Mammary epithelial cell (primary cell): ENCODE measurements at regions of chr9 and their contacts with region 1.

Region 1: DNA sequence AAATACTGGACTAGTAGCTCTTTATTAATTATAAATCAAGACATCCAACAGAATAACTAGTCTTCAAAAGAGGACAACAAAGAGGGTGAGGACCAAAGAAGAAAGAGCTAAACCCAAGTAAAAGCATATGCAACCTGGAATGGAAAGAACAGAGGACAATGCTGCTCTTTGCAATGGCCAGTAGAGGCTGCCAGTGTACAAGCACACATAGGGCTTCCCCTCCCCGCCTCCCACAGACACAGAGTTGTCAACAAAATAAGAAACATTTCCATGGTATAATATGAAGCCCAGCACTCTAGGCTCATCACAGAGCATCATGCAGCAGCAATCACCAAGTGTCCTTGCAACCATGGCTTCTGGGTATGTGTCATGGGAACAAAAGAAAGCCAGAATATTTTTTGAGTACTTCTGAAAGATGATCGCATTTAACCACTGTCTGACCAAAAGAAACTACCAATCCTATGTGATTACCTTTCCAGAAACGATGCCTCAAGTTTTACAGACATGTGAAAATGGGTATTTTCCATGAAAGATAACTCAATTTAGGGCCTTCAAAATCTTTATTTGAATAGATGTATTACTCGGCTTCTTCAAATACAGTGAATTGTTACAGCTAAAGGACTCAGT is 58.1 kb downstream of the RFX3 start:
- DNase-seq: peak; percentile 58
- H3K4me3 ChIP-seq: no peak overlapping the region
- H3K27ac ChIP-seq: no peak overlapping the region
- H3K4me1 ChIP-seq: no peaks in the 10 kb centered on the region
- H3K27me3 ChIP-seq: no peaks in the 10 kb centered on the region
- CTCF ChIP-seq: peak; percentile 100

Region 2: DNA sequence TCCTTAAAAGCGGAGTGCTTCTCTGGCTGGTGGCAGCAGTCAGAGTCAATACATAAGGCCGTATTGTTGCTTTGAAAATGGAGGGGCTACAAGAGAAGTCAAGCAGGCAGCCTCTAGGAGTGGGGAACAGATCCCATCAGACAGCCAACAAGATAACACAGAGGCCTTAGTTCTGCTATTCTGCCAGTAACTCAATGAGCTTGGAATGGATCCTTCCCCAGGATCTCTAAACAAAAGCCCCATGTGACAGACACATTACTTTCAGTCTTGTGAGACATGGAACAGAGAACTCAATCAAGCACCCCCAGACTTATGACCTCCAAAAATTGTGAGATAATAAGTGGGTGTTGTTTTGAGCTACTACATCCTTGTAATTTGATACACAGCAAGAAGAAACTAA is 100.5 kb before region 1 on chr9:
- CTCF ChIA-PET with region 1: no interaction called
- dilution Hi-C with region 1: no loop called
- in situ Hi-C with region 1: no loop called
- intact Hi-C with region 1: no loop called
- DNase-seq: no peak
- H3K4me3 ChIP-seq: no peak overlapping the region
- H3K27ac ChIP-seq: no peak overlapping the region
- H3K4me1 ChIP-seq: no peaks in the 10 kb centered on the region
- H3K27me3 ChIP-seq: no peaks in the 10 kb centered on the region
- CTCF ChIP-seq: no peak

Region 3: GRCh38 chr9:3498691-3499090 is 31.0 kb after region 1 on chr9:
- CTCF ChIA-PET with region 1: no interaction called
- dilution Hi-C with region 1: no loop called
- in situ Hi-C with region 1: no loop called
- intact Hi-C with region 1: no loop called
- DNase-seq: no peak
- H3K4me3 ChIP-seq: no peak overlapping the region
- H3K27ac ChIP-seq: no peak overlapping the region
- H3K4me1 ChIP-seq: no peaks in the 10 kb centered on the region
- H3K27me3 ChIP-seq: no peaks in the 10 kb centered on the region
- CTCF ChIP-seq: no peak

Region 4: DNA sequence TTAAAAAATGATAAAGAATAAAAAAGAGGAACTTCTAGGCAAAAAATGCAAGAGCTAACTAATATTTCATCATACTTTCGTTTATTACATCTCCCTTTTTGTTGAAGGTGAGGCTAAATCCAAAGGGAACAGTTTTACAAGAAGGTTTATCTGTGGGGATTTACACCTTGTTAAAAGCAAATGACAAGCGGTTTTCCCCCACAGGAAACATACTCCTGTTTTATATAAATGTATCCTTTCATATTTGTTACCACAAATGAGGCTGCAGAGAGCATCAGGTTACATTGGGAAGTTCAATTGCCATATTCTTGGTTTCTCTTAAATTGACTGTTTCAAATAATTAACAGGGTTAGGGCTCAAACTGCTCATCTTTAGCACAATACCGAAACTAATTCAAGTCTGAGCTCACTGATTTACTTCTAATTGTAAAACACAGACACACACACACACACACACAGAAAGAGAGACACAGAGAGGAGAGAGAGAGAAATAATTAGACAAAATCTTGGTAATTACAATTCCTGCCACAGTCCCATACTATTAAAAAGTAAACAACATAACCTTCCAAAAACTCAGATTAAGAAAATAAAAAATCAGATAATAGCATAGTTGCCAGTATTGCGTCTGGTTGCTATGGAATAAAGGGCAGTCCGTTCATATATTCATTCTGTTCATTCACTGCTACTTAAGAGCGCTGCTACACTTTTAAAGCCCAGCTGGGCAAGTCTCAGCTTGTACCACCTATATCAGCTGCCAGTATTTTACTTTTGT is 41.0 kb after region 1 on chr9:
- CTCF ChIA-PET with region 1: interaction called, 4 read pairs
- dilution Hi-C with region 1: no loop called
- in situ Hi-C with region 1: no loop called
- intact Hi-C with region 1: loop called (anchors 1 kb)
- DNase-seq: peak; percentile 47
- H3K4me3 ChIP-seq: peak overlapping the region; percentile 33 to 60 (median 58)
- H3K27ac ChIP-seq: peak overlapping the region; percentile 93
- H3K4me1 ChIP-seq: no peaks in the 10 kb centered on the region
- H3K27me3 ChIP-seq: no peaks in the 10 kb centered on the region
- CTCF ChIP-seq: no peak

Region 5: GRCh38 chr9:3525836-3526164 is 58.1 kb after region 1 on chr9 and contains the start of gene RFX3:
- CTCF ChIA-PET with region 1: no interaction called
- dilution Hi-C with region 1: no loop called
- in situ Hi-C with region 1: no loop called
- intact Hi-C with region 1: loop called (anchors 5 kb)
- DNase-seq: peak; percentile 94
- H3K4me3 ChIP-seq: peak within 1 kb of the TSS; percentile 92 to 100 (median 98)
- H3K27ac ChIP-seq: peak within 1 kb of the TSS; percentile 99
- H3K4me1 ChIP-seq: peaks cover 8% of the 10 kb centered on the region
- H3K27me3 ChIP-seq: no peaks in the 10 kb centered on the region
- CTCF ChIP-seq: no peak
- total RNA-seq, gene RFX3: 2.3 to 7.9 TPM

Region 6: GRCh38 chr9:3647652-3648051 is 179.9 kb after region 1 on chr9:
- CTCF ChIA-PET with region 1: no interaction called
- dilution Hi-C with region 1: no loop called
- in situ Hi-C with region 1: no loop called
- intact Hi-C with region 1: loop called (anchors 1 kb)
- DNase-seq: no peak
- H3K4me3 ChIP-seq: no peak overlapping the region
- H3K27ac ChIP-seq: no peak overlapping the region
- H3K4me1 ChIP-seq: no peaks in the 10 kb centered on the region
- H3K27me3 ChIP-seq: no peaks in the 10 kb centered on the region
- CTCF ChIP-seq: no peak

Region 7: GRCh38 chr9:4339357-4339756 is 871.7 kb after region 1 on chr9:
- CTCF ChIA-PET with region 1: no interaction called
- dilution Hi-C with region 1: no loop called
- in situ Hi-C with region 1: loop called in 1 of 2 experiments (anchors 25 kb)
- intact Hi-C with region 1: no loop called
- DNase-seq: peak; percentile 80
- H3K4me3 ChIP-seq: no peak overlapping the region
- H3K27ac ChIP-seq: no peak overlapping the region
- H3K4me1 ChIP-seq: peaks cover 7% of the 10 kb centered on the region
- H3K27me3 ChIP-seq: no peaks in the 10 kb centered on the region
- CTCF ChIP-seq: peak; percentile 96 to 99

Region 8: GRCh38 chr9:4375424-4376200 is 907.9 kb after region 1 on chr9:
- CTCF ChIA-PET with region 1: no interaction called
- dilution Hi-C with region 1: no loop called
- in situ Hi-C with region 1: no loop called
- intact Hi-C with region 1: loop called (anchors 2 kb)
- DNase-seq: peak; percentile 56
- H3K4me3 ChIP-seq: no peak overlapping the region
- H3K27ac ChIP-seq: no peak overlapping the region
- H3K4me1 ChIP-seq: peaks cover 6% of the 10 kb centered on the region
- H3K27me3 ChIP-seq: no peaks in the 10 kb centered on the region
- CTCF ChIP-seq: peak; percentile 60